PC-9 (cell line): ENCODE measurements at regions of chr14 and their contacts with region 1.

Region 1: GRCh38 chr14:22472935-22473854 is 115.8 kb downstream of the DAD1 start:
- DNase-seq: peak in 1 of 2 experiments; percentile 32
- H3K4me3 ChIP-seq: no peak overlapping the region
- H3K27ac ChIP-seq: no peak overlapping the region
- H3K4me1 ChIP-seq: no peaks in the 10 kb centered on the region
- H3K27me3 ChIP-seq: no peaks in the 10 kb centered on the region
- CTCF ChIP-seq: peak; percentile 72

Region 2: DNA sequence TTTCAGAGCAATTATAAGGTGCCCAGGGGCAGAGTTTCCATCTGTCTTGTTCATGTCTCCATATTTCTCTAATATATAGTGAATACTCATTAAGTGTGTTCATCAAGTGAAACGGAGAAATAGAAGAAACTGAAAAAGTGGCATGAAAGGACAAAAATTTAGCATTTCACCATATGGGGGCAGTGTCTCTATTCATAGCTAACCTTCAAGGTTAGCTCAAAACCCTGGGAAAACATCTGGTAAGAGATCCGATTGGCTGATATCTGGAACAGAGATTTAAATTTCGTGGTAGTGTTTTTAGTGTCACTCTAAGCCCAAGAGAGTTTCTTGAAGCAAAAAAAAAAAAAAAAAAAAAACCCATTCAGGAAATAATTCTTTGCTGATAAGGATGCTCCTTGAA is 251.7 kb before region 1 on chr14:
- CTCF ChIA-PET with region 1: no interaction called
- POLR2A ChIA-PET with region 1: no interaction called
- intact Hi-C with region 1: loop called (anchors 5 kb)
- DNase-seq: no peak
- H3K4me3 ChIP-seq: no peak overlapping the region
- H3K27ac ChIP-seq: no peak overlapping the region
- H3K4me1 ChIP-seq: peaks cover 18% of the 10 kb centered on the region
- H3K27me3 ChIP-seq: no peaks in the 10 kb centered on the region
- CTCF ChIP-seq: peak; percentile 48; the same call in 1 of the 2 replicates

Region 3: DNA sequence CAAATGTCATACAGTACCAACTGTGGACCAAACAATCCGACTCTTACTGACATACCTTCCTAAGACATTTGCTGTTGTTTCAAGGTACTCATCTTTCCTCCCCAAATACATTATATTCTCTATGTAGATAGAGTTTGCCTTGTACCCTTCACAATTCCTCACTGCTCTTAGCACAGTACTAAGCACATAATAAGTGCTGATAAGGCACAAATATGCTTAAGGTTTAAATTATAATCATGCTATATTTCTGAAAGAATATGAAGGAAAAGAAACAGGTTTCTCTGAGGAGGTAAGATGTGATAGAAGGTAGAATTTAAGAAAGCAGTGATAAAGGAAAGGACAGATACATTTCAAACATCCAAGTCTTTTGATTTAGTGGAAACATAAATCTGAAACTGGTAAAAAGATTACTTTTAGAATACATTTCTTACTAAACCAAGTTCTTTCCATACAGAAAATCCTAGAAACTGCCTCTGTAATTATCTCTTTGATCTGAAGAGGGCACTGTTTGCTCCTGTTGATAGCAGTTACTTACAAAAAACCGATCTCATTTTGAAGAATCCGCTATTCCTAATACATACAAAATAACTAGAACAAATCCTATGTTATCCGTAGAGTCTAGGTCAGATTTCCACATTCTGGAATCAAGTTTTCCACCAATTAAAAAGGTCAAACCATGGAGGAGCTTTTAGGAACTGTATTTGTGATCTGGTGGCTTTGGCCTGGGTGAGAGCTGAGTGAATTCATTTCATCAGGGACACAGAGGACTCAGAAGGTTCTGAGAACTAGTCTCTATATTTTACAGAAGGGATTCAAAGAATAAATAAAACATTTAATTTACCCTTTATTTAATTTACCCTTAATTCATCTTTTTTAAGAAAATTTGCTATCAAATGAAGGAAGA is 196.0 kb before region 1 on chr14:
- CTCF ChIA-PET with region 1: no interaction called
- POLR2A ChIA-PET with region 1: no interaction called
- intact Hi-C with region 1: loop called (anchors 1 kb)
- DNase-seq: no peak
- H3K4me3 ChIP-seq: no peak overlapping the region
- H3K27ac ChIP-seq: no peak overlapping the region
- H3K4me1 ChIP-seq: no peaks in the 10 kb centered on the region
- H3K27me3 ChIP-seq: no peaks in the 10 kb centered on the region
- CTCF ChIP-seq: peak; percentile 71

Region 4: GRCh38 chr14:22314181-22314820 is 158.9 kb before region 1 on chr14:
- CTCF ChIA-PET with region 1: no interaction called
- POLR2A ChIA-PET with region 1: no interaction called
- intact Hi-C with region 1: loop called (anchors 5 kb)
- DNase-seq: no peak
- H3K4me3 ChIP-seq: no peak overlapping the region
- H3K27ac ChIP-seq: no peak overlapping the region
- H3K4me1 ChIP-seq: no peaks in the 10 kb centered on the region
- H3K27me3 ChIP-seq: no peaks in the 10 kb centered on the region
- CTCF ChIP-seq: peak; percentile 73

Region 5: GRCh38 chr14:22386924-22387775 is 86.0 kb before region 1 on chr14:
- CTCF ChIA-PET with region 1: interaction called, 7 read pairs
- POLR2A ChIA-PET with region 1: no interaction called
- intact Hi-C with region 1: loop called (anchors 1 kb)
- DNase-seq: peak in 1 of 2 experiments; percentile 37
- H3K4me3 ChIP-seq: no peak overlapping the region
- H3K27ac ChIP-seq: no peak overlapping the region
- H3K4me1 ChIP-seq: peaks cover 47% of the 10 kb centered on the region
- H3K27me3 ChIP-seq: no peaks in the 10 kb centered on the region
- CTCF ChIP-seq: peak; percentile 81